ENCODE measurements at regions of chr11 and their contacts with region 1.

Region 1: GRCh38 chr11:76030286-76030685 is 176.0 kb downstream of the WNT11 start:
- DNase-seq: peak; percentile 99
- ATAC-seq: peak; percentile 85
- H3K4me3 ChIP-seq: peak overlapping the region; percentile 41; the same call in 1 of the 2 replicates
- H3K27ac ChIP-seq: peak overlapping the region; percentile 97
- H3K4me1 ChIP-seq: peaks cover 64% of the 10 kb centered on the region
- H3K27me3 ChIP-seq: no peaks in the 10 kb centered on the region
- CTCF ChIP-seq: no peak

Region 2: GRCh38 chr11:75896843-75897419 is 133.4 kb before region 1 on chr11:
- CTCF ChIA-PET with region 1: no interaction called
- POLR2A ChIA-PET with region 1: interaction called, 9 read pairs
- intact Hi-C with region 1: loop called (anchors 1 kb)
- DNase-seq: peak; percentile 82
- ATAC-seq: peak; percentile 63; the same call in 1 of the 2 replicates
- H3K4me3 ChIP-seq: no peak overlapping the region
- H3K27ac ChIP-seq: no peak overlapping the region
- H3K4me1 ChIP-seq: no peaks in the 10 kb centered on the region
- H3K27me3 ChIP-seq: no peaks in the 10 kb centered on the region
- CTCF ChIP-seq: peak; percentile 93

Region 3: DNA sequence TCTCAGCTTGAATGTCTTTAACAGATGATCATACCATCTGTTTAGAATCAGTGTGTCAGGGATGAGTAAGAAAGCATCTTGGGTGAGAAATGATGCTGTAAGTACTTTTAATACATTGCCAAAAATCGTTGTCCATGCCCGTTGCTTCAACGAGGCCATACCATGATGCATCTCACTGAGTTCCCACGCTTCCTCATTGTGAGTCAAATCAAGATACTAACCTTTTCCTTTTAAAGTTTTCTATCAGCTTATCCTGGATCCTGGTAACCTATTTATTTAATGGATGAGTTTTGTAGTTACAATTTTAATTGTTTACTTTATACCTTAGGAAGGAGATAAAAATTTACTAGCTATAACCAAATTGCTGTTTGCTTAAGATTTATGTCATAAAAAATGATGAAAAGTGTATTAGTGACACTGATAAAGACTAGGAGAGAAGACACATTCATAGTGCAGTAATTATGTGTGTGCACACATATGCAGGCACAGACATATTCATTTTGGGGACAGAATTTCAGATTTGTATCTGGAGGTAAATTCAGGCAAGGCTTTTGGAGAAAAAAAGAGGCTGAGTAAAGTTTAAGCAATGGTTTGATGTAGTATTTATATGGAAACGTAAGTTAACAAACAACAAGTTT is 60.5 kb before region 1 on chr11:
- CTCF ChIA-PET with region 1: no interaction called
- POLR2A ChIA-PET with region 1: no interaction called
- intact Hi-C with region 1: loop called (anchors 1 kb)
- DNase-seq: peak; percentile 94
- ATAC-seq: peak; percentile 82
- H3K4me3 ChIP-seq: no peak overlapping the region; the same call in 1 of the 2 replicates
- H3K27ac ChIP-seq: peak overlapping the region; percentile 94
- H3K4me1 ChIP-seq: peaks cover 41% of the 10 kb centered on the region
- H3K27me3 ChIP-seq: no peaks in the 10 kb centered on the region
- CTCF ChIP-seq: no peak

Region 4: DNA sequence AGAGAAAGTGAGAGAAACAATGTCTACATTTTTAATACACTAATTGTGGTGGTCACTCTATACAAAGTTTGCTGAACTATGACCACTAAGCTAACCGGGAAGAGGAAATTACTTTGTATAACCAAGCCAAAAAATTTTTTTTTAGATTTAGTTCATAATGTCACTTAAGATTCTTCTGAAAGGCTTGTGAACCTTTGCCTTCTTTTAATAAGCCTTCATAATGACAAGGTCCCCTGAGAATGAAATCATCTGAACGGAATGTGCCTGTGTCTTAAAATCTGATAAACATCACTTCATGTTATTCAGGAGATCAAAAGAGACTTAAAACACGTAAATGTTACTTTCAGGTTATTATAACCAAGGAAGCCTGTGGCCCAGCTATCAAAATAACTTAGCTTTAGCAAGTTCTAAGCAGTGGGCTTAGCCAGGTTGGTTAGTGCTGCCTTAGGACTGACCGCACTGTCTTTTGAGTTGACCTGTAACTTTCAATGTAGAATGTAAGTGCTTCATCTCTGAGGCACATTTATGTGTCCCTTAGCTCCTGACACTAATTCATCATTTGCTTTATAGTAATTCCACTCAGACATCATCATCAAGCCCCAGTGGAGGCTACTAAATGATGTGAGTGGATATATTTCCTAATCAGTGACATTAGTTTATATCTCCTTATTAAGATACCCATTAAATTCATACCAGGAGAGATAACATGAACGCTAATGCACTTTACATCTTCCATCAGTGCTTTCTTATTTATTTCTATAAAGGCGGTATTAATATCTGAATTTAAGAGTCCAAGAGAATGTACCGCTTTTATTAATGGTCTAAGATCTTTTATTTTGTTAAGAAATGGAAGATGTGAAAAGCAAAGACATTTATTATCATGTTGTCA is 53.5 kb after region 1 on chr11:
- CTCF ChIA-PET with region 1: no interaction called
- POLR2A ChIA-PET with region 1: no interaction called
- intact Hi-C with region 1: loop called (anchors 5 kb)
- DNase-seq: peak; percentile 67
- ATAC-seq: peak; percentile 58
- H3K4me3 ChIP-seq: no peak overlapping the region; the same call in 1 of the 2 replicates
- H3K27ac ChIP-seq: peak overlapping the region; percentile 14
- H3K4me1 ChIP-seq: peaks cover 14% of the 10 kb centered on the region
- H3K27me3 ChIP-seq: no peaks in the 10 kb centered on the region
- CTCF ChIP-seq: no peak

Region 5: DNA sequence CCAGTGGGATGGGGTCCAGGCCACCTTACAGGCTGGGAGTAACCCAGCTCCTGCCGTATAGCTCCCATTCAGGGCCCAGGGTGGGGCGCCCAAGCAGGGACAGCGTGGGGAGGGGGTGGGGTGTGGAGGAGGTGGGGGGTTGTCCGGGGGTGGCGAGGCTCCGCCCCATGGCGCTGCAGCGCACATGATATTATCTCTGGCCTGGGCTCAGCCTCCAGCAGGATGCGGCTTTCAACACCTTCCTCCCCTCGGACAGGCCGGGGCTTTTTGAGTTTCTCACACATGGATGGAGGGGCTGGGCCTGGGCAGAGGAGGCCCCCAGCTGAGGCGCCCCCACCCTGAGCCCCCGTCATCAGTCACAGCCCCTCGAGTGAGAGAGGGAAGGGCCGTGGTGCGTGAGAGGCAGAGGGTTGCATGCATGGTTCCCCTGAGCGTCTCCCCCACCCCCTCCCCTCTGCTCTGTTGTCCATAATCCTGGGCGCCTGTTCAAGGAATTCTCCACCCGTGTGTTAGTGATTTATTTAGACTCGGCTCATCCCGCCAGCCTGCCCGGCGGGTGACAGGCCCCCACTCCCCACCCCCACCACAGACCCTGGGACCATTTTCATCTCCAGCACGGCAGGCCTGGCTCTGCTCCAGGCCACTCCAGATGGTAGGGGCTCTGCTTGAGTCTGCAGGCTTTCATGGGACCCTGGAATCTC is 131.1 kb after region 1 on chr11:
- CTCF ChIA-PET with region 1: no interaction called
- POLR2A ChIA-PET with region 1: no interaction called
- intact Hi-C with region 1: no loop called
- DNase-seq: no peak
- ATAC-seq: no peak
- H3K4me3 ChIP-seq: no peak overlapping the region
- H3K27ac ChIP-seq: no peak overlapping the region
- H3K4me1 ChIP-seq: no peaks in the 10 kb centered on the region
- H3K27me3 ChIP-seq: no peaks in the 10 kb centered on the region
- CTCF ChIP-seq: no peak

Region 6: DNA sequence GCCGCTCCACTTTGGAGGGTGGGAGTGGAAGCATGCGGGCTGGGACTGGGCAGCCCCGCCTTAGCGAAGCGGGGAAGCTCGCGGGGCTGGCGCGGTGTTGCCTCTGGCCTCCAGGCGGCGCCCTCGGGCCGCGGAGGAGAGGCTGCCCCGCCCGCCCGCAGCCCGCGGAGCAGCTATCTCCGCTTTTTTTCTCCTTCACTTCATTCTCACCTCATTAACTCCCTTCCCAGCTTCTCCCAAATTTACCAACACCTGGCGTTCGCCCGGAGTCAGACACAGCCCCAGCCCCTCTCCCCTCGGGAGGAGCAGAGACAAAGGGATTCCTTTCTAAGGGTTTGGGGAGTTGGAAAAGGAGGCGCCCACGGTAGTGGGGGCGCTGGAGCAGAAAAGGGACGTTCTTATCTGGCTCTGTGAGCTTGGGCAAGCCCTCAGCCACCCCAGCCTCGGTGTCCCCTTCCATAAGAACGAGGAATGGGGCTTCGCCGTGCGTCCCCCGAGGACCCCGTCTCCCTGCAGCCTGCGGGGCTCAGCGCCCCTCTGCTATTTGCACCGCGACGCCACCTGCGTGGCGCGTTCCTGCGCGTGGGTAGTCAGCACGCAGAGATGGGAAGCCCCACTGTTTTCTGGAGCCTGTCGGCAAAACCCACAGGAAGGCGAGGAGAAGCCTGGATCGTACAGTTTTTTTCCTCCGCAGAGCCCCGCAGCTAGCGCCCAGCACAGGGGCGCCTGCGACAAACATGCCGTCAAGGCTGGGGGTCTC is 177.5 kb after region 1 on chr11:
- CTCF ChIA-PET with region 1: no interaction called
- POLR2A ChIA-PET with region 1: no interaction called
- intact Hi-C with region 1: no loop called
- DNase-seq: peak; percentile 93
- ATAC-seq: peak; percentile 56
- H3K4me3 ChIP-seq: peak overlapping the region; percentile 67
- H3K27ac ChIP-seq: no peak overlapping the region
- H3K4me1 ChIP-seq: peaks cover 32% of the 10 kb centered on the region
- H3K27me3 ChIP-seq: peaks cover 49% of the 10 kb centered on the region
- CTCF ChIP-seq: peak; percentile 94